Activated CD4-positive, alpha-beta T cell treated with anti-CD3 and anti-CD28 coated beads, Interleukin-2, amount 10 ng/mL, durations not matched to agents 24 days and 14 days (primary cell): ENCODE measurements at regions of chr2 and their contacts with region 1.

Region 1: GRCh38 chr2:182077451-182078142 is 91.9 kb downstream of the PPP1R1C start:
- DNase-seq: peak; percentile 67
- H3K4me3 Mint-ChIP-seq: no peak overlapping the region
- H3K27ac Mint-ChIP-seq: no peak overlapping the region
- H3K4me1 Mint-ChIP-seq: no peaks in the 10 kb centered on the region
- H3K27me3 Mint-ChIP-seq: peaks cover 3% of the 10 kb centered on the region

Region 2: GRCh38 chr2:181077128-181077709 is 1000.4 kb before region 1 on chr2:
- intact Hi-C with region 1: loop called (anchors 5 kb)
- DNase-seq: peak; percentile 84
- H3K4me3 Mint-ChIP-seq: no peak overlapping the region
- H3K27ac Mint-ChIP-seq: no peak overlapping the region
- H3K4me1 Mint-ChIP-seq: peaks cover 2% of the 10 kb centered on the region
- H3K27me3 Mint-ChIP-seq: no peaks in the 10 kb centered on the region

Region 3: GRCh38 chr2:181742922-181743722 is 334.5 kb before region 1 on chr2:
- intact Hi-C with region 1: loop called (anchors 1 kb)
- DNase-seq: peak; percentile 74
- H3K4me3 Mint-ChIP-seq: no peak overlapping the region
- H3K27ac Mint-ChIP-seq: no peak overlapping the region
- H3K4me1 Mint-ChIP-seq: peaks cover 3% of the 10 kb centered on the region
- H3K27me3 Mint-ChIP-seq: peaks cover 23% of the 10 kb centered on the region

Region 4: DNA sequence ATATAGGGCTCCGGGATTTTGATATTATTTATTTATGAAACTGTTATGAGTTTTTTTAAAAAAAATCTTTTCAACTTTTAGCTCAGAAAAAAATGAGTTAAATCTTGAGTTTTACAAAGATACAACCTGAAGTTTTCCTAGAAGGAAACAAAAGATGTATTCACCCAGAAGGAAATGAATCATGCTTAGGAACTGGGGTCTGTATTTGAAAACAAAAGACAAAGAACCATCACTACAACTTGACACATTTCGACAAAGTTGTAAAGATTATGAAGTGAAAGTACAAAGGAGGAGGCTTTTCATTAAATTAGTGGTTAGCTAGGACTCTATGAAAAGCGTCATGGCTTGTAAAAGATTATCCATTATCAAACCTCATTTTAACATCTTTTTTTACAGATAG is 205.9 kb after region 1 on chr2:
- intact Hi-C with region 1: no loop called
- DNase-seq: no peak
- H3K4me3 Mint-ChIP-seq: no peak overlapping the region
- H3K27ac Mint-ChIP-seq: no peak overlapping the region
- H3K4me1 Mint-ChIP-seq: no peaks in the 10 kb centered on the region
- H3K27me3 Mint-ChIP-seq: no peaks in the 10 kb centered on the region